ENCODE measurements at regions of chr2 and their contacts with region 1.

Region 1: GRCh38 chr2:121076885-121077549 is 208.0 kb downstream of the TFCP2L1 start:
- DNase-seq: peak; percentile 34 to 65
- ATAC-seq: peak in 7 of 8 donors; percentile 34 to 65 (median 43)
- H3K4me3 ChIP-seq: no peak overlapping the region
- H3K27ac ChIP-seq: no peak overlapping the region
- H3K4me1 ChIP-seq: peaks cover 0 to 17% (median 0%) of the 10 kb centered on the region in 9 donors
- H3K27me3 ChIP-seq: peaks cover 0 to 55% (median 37%) of the 10 kb centered on the region in 7 donors
- CTCF ChIP-seq: peak; percentile 59 to 94 (median 81)

Region 2: DNA sequence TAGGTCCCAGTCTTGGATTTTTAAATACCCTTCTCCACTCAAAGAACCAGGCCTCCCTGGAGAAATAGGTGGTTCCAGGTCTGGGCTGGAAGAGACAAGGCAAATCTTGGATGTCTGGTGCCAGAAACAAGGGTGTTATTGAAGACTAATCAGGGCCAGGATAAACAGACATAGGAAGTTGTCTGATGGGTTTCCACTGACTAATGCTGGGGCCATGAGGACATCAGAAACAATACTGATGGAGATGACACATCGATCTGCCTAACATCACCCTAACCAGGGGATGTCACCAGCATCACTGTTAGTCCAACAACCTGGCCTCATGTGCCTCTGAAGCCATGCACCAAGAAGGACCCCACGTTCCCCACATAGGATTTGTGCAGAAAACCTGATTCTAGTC is 383.9 kb before region 1 on chr2:
- intact Hi-C with region 1: loop called (anchors 1 to 5 kb)
- DNase-seq: no peak
- ATAC-seq: no peak
- H3K4me3 ChIP-seq: no peak overlapping the region
- H3K27ac ChIP-seq: no peak overlapping the region
- H3K4me1 ChIP-seq: peaks cover 0 to 4% (median 0%) of the 10 kb centered on the region in 9 donors
- H3K27me3 ChIP-seq: peaks cover 0 to 65% (median 46%) of the 10 kb centered on the region in 7 donors
- CTCF ChIP-seq: no peak

Region 3: DNA sequence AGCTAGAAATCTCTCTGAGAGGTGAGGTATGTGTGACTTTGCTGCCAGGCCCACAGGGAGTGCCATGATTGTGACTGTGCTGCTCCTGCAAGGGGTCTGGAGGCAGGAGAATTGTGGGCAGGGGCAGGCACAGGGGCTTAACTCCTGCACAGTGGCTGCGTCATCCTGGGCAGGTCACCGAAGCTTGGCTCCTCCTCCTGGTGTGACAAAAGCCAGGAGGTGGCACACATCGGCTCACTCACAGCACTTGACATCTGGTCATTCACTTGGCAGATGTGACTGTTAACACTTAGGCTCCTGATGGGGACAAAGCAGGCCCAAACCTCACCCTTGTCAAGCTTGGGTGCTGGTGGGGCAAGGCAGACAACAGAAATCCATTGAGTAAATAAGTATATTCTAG is 377.7 kb before region 1 on chr2:
- intact Hi-C with region 1: loop called (anchors 1 to 5 kb)
- DNase-seq: no peak
- ATAC-seq: no peak
- H3K4me3 ChIP-seq: no peak overlapping the region
- H3K27ac ChIP-seq: no peak overlapping the region
- H3K4me1 ChIP-seq: peaks cover 0 to 4% (median 0%) of the 10 kb centered on the region in 9 donors
- H3K27me3 ChIP-seq: peaks cover 0 to 69% (median 38%) of the 10 kb centered on the region in 7 donors
- CTCF ChIP-seq: no peak

Region 4: DNA sequence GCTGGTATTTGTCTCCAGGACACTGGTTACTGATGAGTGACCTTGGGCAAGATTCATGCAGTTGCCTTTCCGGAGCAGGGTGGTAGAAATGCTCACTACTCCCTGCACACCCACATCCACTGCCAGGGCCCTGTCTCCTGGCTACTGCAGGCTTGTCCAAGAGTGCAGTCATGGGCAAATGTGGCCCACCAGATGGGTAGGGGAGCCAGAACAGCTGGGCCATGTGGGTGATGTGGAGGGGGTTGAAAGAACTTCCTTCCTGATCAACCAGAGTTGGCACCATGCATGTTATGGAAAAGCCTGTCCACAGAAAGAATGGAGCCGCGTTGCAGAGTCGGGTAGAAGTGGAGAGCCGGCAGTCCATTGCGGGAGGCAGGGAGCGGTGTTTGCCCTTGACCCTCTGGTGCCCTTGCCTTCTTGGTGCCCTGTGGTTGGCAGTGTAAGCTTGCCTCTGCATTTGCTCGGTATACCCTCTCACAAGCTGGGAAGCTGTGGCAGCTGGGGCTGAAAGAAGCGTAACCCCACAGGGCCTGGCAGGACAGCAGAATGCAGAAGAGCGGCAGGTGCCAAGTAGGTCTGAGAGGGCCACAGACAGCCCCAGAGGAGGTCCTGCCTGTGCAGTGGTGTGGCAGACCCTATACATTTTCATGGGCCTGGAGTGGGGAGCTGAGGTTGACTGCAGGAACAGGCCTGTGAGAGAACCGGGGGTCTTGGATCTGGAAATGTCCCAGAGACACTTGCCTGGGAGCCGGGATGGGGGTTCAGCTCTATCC is 45.3 kb before region 1 on chr2:
- intact Hi-C with region 1: no loop called
- DNase-seq: no peak
- ATAC-seq: no peak
- H3K4me3 ChIP-seq: no peak overlapping the region
- H3K27ac ChIP-seq: no peak overlapping the region
- H3K4me1 ChIP-seq: no peaks in the 10 kb centered on the region
- H3K27me3 ChIP-seq: peaks cover 0 to 42% (median 14%) of the 10 kb centered on the region in 7 donors
- CTCF ChIP-seq: no peak